MCF 10A (cell line): ENCODE measurements at regions of chr7 and their contacts with region 1.

Region 1: GRCh38 chr7:30087371-30087770 is 47.4 kb upstream of the MTURN start:
- DNase-seq: no peak
- H3K4me3 Mint-ChIP-seq: no peak overlapping the region
- H3K27ac Mint-ChIP-seq: no peak overlapping the region
- H3K4me1 Mint-ChIP-seq: peaks cover 11% of the 10 kb centered on the region
- H3K27me3 Mint-ChIP-seq: no peaks in the 10 kb centered on the region
- CTCF ChIP-seq: no peak

Region 2: DNA sequence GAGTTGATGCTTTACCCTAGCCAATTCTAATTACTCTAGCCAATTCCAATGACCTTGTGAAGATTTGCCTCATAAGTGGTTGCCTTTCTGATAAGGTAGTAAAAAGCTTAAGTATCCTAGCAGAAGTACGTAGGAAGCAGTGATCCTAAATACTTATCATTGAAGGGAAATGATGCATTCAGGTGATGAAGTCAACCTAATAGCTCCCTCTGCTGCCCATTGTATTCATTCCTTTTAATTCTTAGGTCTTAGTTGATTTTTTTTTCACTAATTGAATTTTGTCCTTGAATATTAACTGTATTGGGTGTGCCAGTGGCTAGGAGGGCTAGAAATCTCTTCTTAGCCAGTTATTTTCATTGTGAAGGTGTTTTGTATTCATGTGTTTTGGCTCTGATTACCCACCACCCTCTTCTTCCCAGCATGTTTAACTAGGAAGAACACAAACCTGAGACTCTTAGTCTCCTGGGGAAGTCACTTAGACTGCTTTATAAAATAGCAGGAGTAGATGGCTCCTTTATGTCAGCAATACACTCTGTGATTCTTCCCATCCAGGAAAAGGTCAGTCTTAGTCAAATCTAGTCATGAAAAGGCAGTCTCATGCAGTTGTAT is 12.8 kb before region 1 on chr7:
- CTCF ChIA-PET with region 1: interaction called, 18 read pairs
- POLR2A ChIA-PET with region 1: no interaction called
- intact Hi-C with region 1: no loop called
- DNase-seq: peak; percentile 59
- H3K4me3 Mint-ChIP-seq: no peak overlapping the region
- H3K27ac Mint-ChIP-seq: no peak overlapping the region
- H3K4me1 Mint-ChIP-seq: peaks cover 6% of the 10 kb centered on the region
- H3K27me3 Mint-ChIP-seq: no peaks in the 10 kb centered on the region
- CTCF ChIP-seq: peak; percentile 40

Region 3: DNA sequence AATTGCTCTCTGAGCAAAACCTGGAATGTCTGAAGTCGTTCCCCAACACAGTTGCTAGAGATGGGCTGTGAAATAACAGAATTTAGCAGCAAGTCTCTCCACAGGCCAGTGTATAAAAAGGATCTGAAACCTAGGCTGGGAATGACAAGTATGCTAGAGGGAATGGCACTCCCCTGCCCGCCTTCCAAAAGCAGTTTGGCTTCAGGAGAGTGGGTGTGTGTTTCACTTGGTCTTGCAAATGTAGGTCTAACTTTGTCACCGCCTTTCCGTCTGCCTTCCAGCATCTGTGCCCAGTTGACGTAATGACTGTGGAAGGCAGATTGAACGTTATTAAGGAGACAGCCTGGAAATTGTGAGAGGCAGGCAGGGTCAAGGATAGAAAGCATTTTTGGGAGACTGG is 29.4 kb after region 1 on chr7:
- CTCF ChIA-PET with region 1: no interaction called
- POLR2A ChIA-PET with region 1: no interaction called
- intact Hi-C with region 1: no loop called
- DNase-seq: no peak
- H3K4me3 Mint-ChIP-seq: no peak overlapping the region
- H3K27ac Mint-ChIP-seq: no peak overlapping the region
- H3K4me1 Mint-ChIP-seq: no peaks in the 10 kb centered on the region
- H3K27me3 Mint-ChIP-seq: no peaks in the 10 kb centered on the region
- CTCF ChIP-seq: no peak